ENCODE measurements at regions of chrX and their contacts with region 1.

Region 1: DNA sequence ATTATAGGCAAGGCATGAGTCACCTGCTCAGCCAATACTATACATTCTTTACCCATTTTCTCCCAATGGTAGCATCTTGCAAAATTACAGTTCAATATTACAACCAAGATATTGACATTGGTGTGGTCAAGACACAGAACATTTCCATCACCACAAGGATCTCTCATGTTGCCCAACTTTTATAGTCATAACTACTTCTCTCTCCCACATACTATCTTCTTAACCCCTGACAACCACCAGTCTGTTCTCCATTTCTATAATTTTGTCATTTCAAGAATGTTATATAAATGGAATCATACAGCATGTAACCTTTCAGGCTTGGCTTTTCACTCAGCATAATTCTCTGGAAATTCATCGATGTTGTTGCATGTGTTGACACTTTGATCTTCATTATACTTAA is 144.9 kb downstream of the ENOX2 start:
- DNase-seq: no peak
- ATAC-seq: no peak
- H3K4me3 ChIP-seq: no peak overlapping the region
- H3K27ac ChIP-seq: no peak overlapping the region
- H3K4me1 ChIP-seq: peaks cover 8 to 31% of the 10 kb centered on the region in 2 experiments; a peak in 4 of 5 replicates
- H3K27me3 ChIP-seq: no peaks in the 10 kb centered on the region
- CTCF ChIP-seq: no peak
- EP300 ChIP-seq: no peak
- POLR2A ChIP-seq: no peak
- RAD21 ChIP-seq: no peak

Region 2: GRCh38 chrX:130575831-130576389 is 182.2 kb before region 1 on chrX:
- CTCF ChIA-PET with region 1: no interaction called
- POLR2A ChIA-PET with region 1: no interaction called
- in situ Hi-C with region 1: no loop called
- intact Hi-C with region 1: loop called (anchors 10 kb)
- DNase-seq: peak; percentile 29 to 65 (median 42)
- ATAC-seq: peak; percentile 88
- H3K4me3 ChIP-seq: no peak overlapping the region
- H3K27ac ChIP-seq: no peak overlapping the region
- H3K4me1 ChIP-seq: no peaks in the 10 kb centered on the region
- H3K27me3 ChIP-seq: no peaks in the 10 kb centered on the region
- CTCF ChIP-seq: peak; percentile 70 to 85 (median 82)
- EP300 ChIP-seq: no peak
- POLR2A ChIP-seq: no peak
- RAD21 ChIP-seq: peak; percentile 63 to 81

Region 3: DNA sequence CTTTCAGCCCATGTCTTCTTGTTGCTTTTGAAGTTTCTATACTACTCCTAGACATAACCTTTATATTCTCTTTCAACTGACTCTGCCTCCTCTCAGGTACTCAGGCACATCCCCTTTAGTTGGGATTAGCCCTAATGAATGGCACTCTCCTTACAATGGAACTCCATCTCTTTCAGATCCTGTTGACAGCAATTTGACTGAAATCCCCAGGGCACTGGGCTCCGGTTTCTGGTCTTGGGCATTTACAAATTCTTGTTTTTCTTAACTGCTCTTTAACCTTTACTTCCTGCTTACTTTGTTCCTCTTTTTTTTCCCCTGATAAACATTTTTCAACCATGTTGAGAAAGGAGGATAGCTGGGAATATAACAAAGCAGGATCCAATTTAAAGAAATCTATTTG is 76.1 kb after region 1 on chrX:
- CTCF ChIA-PET with region 1: no interaction called
- POLR2A ChIA-PET with region 1: no interaction called
- in situ Hi-C with region 1: no loop called
- intact Hi-C with region 1: loop called (anchors 5 kb)
- DNase-seq: no peak
- ATAC-seq: no peak
- H3K4me3 ChIP-seq: no peak overlapping the region
- H3K27ac ChIP-seq: no peak overlapping the region
- H3K4me1 ChIP-seq: peaks cover 0 to 41% of the 10 kb centered on the region in 2 experiments; a peak in 2 of 5 replicates
- H3K27me3 ChIP-seq: no peaks in the 10 kb centered on the region
- CTCF ChIP-seq: no peak
- EP300 ChIP-seq: no peak
- POLR2A ChIP-seq: no peak
- RAD21 ChIP-seq: no peak

Region 4: DNA sequence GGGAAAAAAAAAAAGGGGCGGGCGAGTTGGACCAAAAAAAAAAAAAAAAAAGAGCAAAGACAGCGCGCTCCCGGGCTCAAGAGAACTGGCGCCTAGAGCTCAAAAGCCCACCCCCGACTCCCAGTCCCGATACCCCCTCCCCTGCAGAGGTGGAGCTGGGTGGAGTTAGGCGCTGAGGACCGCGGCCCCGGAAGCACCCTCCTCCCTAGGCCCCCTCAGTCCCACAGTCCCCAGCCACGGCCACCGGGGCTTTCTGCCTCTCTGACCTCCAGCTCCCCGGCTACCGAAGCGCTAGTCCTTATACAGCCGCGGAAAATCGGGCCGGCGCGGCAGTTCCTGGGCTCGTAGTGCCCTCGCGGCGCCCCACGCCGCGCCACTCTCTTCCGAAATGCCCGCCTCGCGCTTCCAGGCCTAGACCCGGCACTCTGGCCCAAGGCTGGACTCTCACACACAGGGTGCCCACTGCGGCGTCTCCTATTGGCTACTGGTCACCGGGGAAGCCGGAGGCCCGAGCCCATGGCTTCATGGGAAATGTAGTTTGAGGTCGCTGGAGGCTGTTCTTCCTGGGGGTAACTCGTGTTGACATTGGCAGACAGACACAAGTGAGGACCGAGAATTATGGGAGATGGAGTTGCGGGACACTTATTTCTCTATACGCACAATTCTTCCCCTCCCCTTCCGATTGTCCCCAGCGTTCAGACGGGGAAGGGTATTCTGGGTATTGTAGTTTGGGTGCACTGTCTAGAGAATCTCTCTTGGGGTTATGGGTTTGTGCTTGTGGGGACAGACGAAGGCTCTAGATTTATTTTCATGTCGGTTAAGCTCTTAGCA is 144.9 kb after region 1 on chrX and contains the start of gene ENOX2:
- CTCF ChIA-PET with region 1: no interaction called
- POLR2A ChIA-PET with region 1: no interaction called
- in situ Hi-C with region 1: no loop called
- intact Hi-C with region 1: loop called (anchors 5 kb)
- DNase-seq: peak; percentile 86 to 96 (median 89)
- ATAC-seq: peak; percentile 99
- H3K4me3 ChIP-seq: peak within 1 kb of the TSS; percentile 67
- H3K27ac ChIP-seq: peak within 1 kb of the TSS; percentile 80
- H3K4me1 ChIP-seq: peaks cover 0 to 3% of the 10 kb centered on the region in 2 experiments; a peak in 1 of 5 replicates
- H3K27me3 ChIP-seq: no peaks in the 10 kb centered on the region
- CTCF ChIP-seq: no peak
- EP300 ChIP-seq: no peak
- POLR2A ChIP-seq: peak; percentile 96
- RAD21 ChIP-seq: no peak
- polyA plus RNA-seq, gene ENOX2: 8.4 TPM